PC-3 (cell line): ENCODE measurements at regions of chr5 and their contacts with region 1.

Region 1: DNA sequence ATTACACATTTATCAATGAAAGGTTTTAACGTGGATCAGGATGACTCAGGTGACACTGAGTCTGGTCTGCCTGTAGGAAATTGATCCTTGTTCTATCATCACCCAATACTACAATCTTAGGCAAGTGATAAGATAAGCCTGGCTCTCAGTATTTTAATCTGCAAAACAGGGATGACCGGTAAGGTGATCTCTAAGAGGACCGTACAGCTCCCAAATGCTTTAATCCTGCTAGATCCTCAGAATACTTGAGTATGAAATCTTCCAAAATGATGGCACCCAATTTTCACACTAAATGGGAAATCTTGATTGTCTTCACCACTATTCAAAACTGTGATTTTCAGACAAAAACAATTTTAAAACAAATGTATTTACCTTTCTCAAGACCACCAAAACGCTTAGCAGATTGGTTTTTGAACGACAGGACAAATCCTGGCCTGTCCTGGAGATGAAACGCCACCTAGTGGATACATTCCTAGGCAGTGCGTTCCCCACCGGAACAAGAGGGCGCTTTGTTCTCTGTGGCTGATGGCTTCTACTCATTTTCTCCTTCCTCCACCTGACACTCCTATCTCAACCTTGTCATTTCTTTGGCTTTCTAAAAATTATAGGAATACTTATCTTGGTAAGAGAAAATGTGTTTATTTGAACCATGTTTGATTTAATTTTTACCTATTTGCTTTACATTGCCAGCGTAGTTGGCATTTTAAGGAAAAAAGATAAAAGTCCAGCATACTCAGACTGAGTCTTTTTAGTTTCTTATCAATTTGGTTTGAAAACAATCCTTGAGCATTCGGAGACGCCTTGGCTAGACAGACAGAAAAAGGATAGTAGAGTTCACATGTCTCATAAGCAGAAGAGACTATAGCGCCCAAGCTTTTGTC is 41.2 kb upstream of the VCAN start:
- DNase-seq: peak; percentile 78
- ATAC-seq: peak; percentile 97
- H3K4me3 ChIP-seq: no peak overlapping the region
- H3K27ac ChIP-seq: no peak overlapping the region
- H3K4me1 ChIP-seq: no peaks in the 10 kb centered on the region; the same call in 1 of the 2 replicates
- H3K27me3 ChIP-seq: no peaks in the 10 kb centered on the region
- CTCF ChIP-seq: peak; percentile 99

Region 2: DNA sequence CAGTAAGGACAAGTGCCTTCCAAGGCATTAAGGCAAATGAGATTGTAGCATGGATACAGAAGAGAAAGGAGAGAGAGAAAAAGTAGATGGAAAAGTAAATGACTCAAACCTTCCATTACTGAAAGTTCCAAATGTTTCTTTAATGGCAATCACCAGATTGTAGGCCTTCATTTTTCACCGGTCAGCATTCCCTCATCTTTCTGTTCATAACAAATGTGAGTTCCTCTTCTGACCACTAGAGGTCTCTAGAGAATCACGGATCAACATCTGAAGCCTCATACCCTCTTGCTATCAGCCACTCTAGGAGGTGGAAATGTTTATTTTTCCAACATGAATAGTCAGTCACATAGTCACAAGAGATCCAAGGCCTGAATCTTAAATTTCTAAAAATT is 1078.6 kb before region 1 on chr5:
- CTCF ChIA-PET with region 1: no interaction called
- POLR2A ChIA-PET with region 1: no interaction called
- intact Hi-C with region 1: loop called (anchors 5 kb)
- DNase-seq: peak; percentile 85
- ATAC-seq: peak; percentile 81
- H3K4me3 ChIP-seq: no peak overlapping the region
- H3K27ac ChIP-seq: peak overlapping the region; percentile 90
- H3K4me1 ChIP-seq: peaks cover 17% of the 10 kb centered on the region
- H3K27me3 ChIP-seq: no peaks in the 10 kb centered on the region
- CTCF ChIP-seq: peak; percentile 89

Region 3: DNA sequence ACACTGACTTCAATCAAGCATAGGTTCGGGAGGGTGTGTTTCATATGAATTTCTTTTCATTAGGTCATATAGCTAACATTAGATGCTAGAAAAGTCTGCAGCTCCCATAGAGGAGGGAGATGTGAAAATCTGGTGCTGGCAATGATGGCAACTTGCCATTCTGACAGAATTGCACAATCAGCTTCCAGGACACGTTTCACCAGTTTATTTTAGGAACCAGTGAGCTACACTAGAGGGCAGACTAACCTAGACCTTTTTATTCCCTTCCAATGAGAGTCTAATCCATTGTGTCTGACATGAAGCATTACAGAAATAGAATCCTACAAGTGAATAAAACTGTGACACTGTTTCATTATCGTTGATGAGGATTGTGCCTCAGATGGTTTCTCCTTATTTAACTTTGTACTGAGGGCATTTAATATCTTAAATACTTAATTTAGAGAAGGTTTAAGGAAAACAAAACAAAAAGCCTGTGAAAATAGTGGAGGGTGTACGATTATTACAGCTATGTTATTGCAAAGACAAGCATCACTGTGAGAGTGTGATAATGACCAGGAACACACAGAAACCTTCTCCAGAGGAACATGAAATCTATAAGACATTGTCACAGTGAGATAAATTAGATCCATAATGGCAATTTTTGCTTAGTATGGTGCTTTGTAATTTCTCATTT is 788.9 kb before region 1 on chr5:
- CTCF ChIA-PET with region 1: no interaction called
- POLR2A ChIA-PET with region 1: no interaction called
- intact Hi-C with region 1: loop called (anchors 1 kb)
- DNase-seq: peak; percentile 89
- ATAC-seq: peak; percentile 88
- H3K4me3 ChIP-seq: no peak overlapping the region
- H3K27ac ChIP-seq: 0 out of 2 replicates have a peak overlapping the region, but pooled peaks have one; percentile 10
- H3K4me1 ChIP-seq: peaks cover 22% of the 10 kb centered on the region
- H3K27me3 ChIP-seq: no peaks in the 10 kb centered on the region
- CTCF ChIP-seq: peak; percentile 76

Region 4: DNA sequence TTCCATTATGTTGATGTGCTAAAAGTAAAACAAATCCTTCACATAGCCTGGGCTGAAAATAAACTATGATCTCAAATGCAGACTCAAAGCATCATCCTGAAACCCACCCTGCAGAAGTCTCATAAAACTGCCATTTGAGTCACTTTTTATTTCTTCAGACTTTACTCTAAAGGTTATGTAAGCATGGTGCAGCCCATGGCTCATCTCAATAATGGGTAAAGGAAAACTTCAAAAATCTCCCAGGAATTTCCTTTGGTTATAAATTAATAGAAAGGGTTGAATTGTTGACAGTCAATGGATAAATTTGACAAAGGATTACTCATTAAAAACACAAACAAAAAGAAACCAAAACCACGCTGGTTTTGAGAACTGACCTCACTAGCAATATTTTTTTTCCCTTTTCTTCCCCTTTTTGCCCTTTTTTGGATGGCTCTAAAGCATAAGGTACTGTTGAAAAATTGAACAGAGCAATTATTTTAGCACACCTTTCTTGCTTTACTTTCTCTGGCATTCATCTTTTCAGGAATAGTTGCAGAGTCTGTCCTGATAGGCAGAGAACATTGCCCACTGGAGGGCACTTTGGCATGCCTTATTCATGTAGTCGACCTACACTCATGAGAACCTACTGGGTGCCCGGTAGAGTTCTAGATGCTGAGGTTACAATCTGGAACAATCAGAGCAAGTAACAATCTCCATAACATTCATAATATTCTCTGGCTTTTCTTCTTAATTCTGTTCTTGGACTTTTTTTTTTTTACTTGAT is 544.6 kb before region 1 on chr5:
- CTCF ChIA-PET with region 1: no interaction called
- POLR2A ChIA-PET with region 1: no interaction called
- intact Hi-C with region 1: loop called (anchors 5 kb)
- DNase-seq: peak; percentile 88
- ATAC-seq: peak; percentile 91
- H3K4me3 ChIP-seq: no peak overlapping the region
- H3K27ac ChIP-seq: peak overlapping the region; percentile 72
- H3K4me1 ChIP-seq: peaks cover 30% of the 10 kb centered on the region
- H3K27me3 ChIP-seq: no peaks in the 10 kb centered on the region
- CTCF ChIP-seq: peak; percentile 57

Region 5: DNA sequence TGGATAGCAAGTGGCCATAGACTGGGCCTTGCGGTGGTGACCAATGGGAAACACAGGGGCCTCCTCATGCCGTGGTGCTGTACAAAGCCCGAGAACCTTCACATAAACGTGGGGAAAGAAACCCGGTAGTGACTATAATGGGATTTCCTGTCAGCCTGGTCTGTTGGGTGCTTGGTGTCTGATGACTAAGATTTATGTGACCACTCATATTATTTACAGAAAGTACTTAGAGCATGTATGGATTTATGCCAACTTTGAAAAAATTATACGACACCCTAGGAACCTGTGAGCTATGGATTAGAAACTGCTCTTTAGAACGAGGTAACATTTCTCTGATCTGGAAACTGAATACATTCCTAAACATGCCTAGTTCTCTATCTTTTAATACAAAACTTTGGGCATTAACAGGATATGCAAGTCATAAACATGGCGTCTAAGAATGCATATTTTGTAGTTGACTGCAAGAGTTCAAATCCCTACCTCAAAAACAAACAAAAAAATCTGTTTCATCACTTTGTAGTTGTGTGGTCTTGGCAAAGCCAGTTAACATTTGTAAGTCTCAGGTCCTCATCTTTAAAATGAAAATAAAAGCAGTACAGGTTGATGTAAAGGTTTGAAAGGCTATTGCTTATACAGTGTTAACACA is 438.6 kb before region 1 on chr5:
- CTCF ChIA-PET with region 1: no interaction called
- POLR2A ChIA-PET with region 1: no interaction called
- intact Hi-C with region 1: loop called (anchors 10 kb)
- DNase-seq: peak; percentile 91
- ATAC-seq: peak; percentile 99
- H3K4me3 ChIP-seq: no peak overlapping the region
- H3K27ac ChIP-seq: peak overlapping the region; percentile 80
- H3K4me1 ChIP-seq: peaks cover 21% of the 10 kb centered on the region
- H3K27me3 ChIP-seq: no peaks in the 10 kb centered on the region
- CTCF ChIP-seq: no peak

Region 6: GRCh38 chr5:83076742-83077661 is 353.4 kb before region 1 on chr5 and contains the starts of genes TMEM167A and XRCC4:
- CTCF ChIA-PET with region 1: no interaction called
- POLR2A ChIA-PET with region 1: no interaction called
- intact Hi-C with region 1: loop called (anchors 10 kb)
- DNase-seq: peak; percentile 98
- ATAC-seq: peak; percentile 100
- H3K4me3 ChIP-seq: peak within 1 kb of the TSS; percentile 94
- H3K27ac ChIP-seq: peak within 1 kb of the TSS; percentile 53
- H3K4me1 ChIP-seq: peaks cover 19% of the 10 kb centered on the region
- H3K27me3 ChIP-seq: no peaks in the 10 kb centered on the region
- CTCF ChIP-seq: no peak
- total RNA-seq, gene TMEM167A: 25.1 and 35.7 TPM in 2 replicates
- total RNA-seq, gene XRCC4: 11.5 and 13.8 TPM in 2 replicates

Region 7: GRCh38 chr5:83281658-83282057 is 148.7 kb before region 1 on chr5:
- CTCF ChIA-PET with region 1: no interaction called
- POLR2A ChIA-PET with region 1: no interaction called
- intact Hi-C with region 1: loop called (anchors 1 kb)
- DNase-seq: peak; percentile 94
- ATAC-seq: peak; percentile 94
- H3K4me3 ChIP-seq: no peak overlapping the region
- H3K27ac ChIP-seq: no peak overlapping the region
- H3K4me1 ChIP-seq: peaks cover 20% of the 10 kb centered on the region
- H3K27me3 ChIP-seq: no peaks in the 10 kb centered on the region
- CTCF ChIP-seq: no peak

Region 8: DNA sequence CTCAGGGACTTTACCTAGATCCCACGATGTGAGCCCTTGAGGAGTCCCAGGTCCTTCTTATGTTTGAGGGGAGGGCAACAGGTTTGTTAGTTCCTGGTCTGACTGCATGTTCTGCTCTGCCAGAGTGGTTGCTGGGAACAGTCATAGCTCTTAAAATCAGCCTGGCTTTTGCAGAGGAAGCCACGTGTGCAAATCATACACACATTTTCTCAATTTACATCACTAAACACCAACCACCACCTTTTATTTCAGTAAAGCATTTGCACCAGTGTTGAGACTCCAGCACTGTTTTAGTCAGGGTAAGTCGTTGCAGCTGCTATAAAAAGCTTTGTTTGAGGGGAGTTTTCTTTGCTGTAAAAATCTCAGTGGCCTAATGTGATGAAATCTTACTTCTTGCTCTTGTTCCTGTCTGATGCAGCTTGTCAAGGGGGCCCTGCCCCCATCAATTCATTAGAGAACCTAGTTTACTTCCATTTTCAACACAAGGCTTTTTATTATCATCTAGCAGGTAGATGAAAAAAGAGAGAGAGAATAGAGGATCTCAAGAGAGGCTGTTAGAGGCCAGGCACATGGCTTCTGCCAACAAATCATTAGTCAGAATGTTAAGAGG is 29.1 kb before region 1 on chr5:
- CTCF ChIA-PET with region 1: no interaction called
- POLR2A ChIA-PET with region 1: no interaction called
- intact Hi-C with region 1: no loop called
- DNase-seq: no peak
- ATAC-seq: no peak
- H3K4me3 ChIP-seq: no peak overlapping the region
- H3K27ac ChIP-seq: no peak overlapping the region
- H3K4me1 ChIP-seq: no peaks in the 10 kb centered on the region
- H3K27me3 ChIP-seq: no peaks in the 10 kb centered on the region
- CTCF ChIP-seq: no peak

Region 9: GRCh38 chr5:83701886-83702285 is 271.5 kb after region 1 on chr5:
- CTCF ChIA-PET with region 1: no interaction called
- POLR2A ChIA-PET with region 1: no interaction called
- intact Hi-C with region 1: no loop called
- DNase-seq: peak; percentile 73
- ATAC-seq: peak; percentile 67
- H3K4me3 ChIP-seq: peak overlapping the region; percentile 53; the same call in 1 of the 2 replicates
- H3K27ac ChIP-seq: peak overlapping the region; percentile 4; the same call in 1 of the 2 replicates
- H3K4me1 ChIP-seq: peaks cover 15% of the 10 kb centered on the region
- H3K27me3 ChIP-seq: no peaks in the 10 kb centered on the region
- CTCF ChIP-seq: no peak

Region 10: GRCh38 chr5:84287951-84288350 is 857.6 kb after region 1 on chr5:
- CTCF ChIA-PET with region 1: no interaction called
- POLR2A ChIA-PET with region 1: no interaction called
- intact Hi-C with region 1: no loop called
- DNase-seq: peak; percentile 96
- ATAC-seq: peak; percentile 96
- H3K4me3 ChIP-seq: peak overlapping the region; percentile 18; the same call in 1 of the 2 replicates
- H3K27ac ChIP-seq: peak overlapping the region; percentile 82
- H3K4me1 ChIP-seq: peaks cover 16% of the 10 kb centered on the region
- H3K27me3 ChIP-seq: no peaks in the 10 kb centered on the region
- CTCF ChIP-seq: no peak